ENCODE measurements at regions of chr3 and their contacts with region 1.

Region 1: DNA sequence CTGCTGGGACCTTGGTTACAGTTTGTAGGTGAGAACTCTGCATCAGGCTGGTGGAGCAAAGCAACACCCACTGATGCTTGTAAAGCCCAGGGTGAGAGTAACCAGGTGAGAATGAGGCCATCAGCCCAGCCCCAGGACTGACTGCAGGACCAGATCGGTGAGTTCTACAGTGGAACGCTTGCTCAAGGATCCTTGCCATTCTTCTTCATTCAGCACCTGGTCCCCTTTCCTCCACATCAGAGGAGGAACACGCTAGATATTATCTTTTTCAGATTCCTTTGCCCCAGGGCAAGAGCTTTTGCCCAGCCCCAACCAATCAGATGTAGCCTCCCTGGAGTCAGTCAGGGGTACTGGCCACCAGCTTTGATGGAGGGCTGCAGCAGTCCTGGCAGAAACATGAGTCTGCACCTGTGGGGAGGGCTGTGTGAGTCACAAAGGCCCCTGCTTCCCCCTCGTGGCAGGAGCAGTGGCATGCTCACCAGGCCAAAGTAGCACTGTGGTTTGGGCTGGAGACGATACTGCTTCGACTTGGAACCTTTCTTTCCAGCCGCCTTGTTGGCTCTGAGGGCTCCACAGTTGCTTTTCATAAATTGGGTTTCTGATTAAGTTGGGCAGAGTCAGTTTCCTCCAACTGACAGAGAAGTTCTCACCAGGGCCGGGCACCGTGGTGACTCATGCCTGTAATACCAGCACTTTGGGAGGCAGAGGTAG is 3.5 kb upstream of the SHISA5 start:
- DNase-seq: peak; percentile 90 to 93
- H3K4me3 ChIP-seq: no peak overlapping the region
- H3K4me3 Mint-ChIP-seq: peak overlapping the region; percentile 7
- H3K27ac Mint-ChIP-seq: peak overlapping the region; percentile 67
- H3K4me1 ChIP-seq: peaks cover 35% of the 10 kb centered on the region
- H3K4me1 Mint-ChIP-seq: peaks cover 14% of the 10 kb centered on the region
- H3K27me3 ChIP-seq: no peaks in the 10 kb centered on the region
- H3K27me3 Mint-ChIP-seq: no peaks in the 10 kb centered on the region
- CTCF ChIP-seq: peak; percentile 81 to 91

Region 2: GRCh38 chr3:48465531-48466378 is 41.8 kb before region 1 on chr3:
- CTCF ChIA-PET with region 1: interaction called, 6 read pairs
- POLR2A ChIA-PET with region 1: no interaction called
- intact Hi-C with region 1: loop called (anchors 1 kb)
- DNase-seq: peak; percentile 97
- H3K4me3 ChIP-seq: no peak overlapping the region
- H3K4me3 Mint-ChIP-seq: peak overlapping the region; percentile 56
- H3K27ac Mint-ChIP-seq: peak overlapping the region; percentile 99
- H3K4me1 ChIP-seq: peaks cover 19% of the 10 kb centered on the region
- H3K4me1 Mint-ChIP-seq: peaks cover 16% of the 10 kb centered on the region
- H3K27me3 ChIP-seq: no peaks in the 10 kb centered on the region
- H3K27me3 Mint-ChIP-seq: no peaks in the 10 kb centered on the region
- CTCF ChIP-seq: peak; percentile 61 to 83

Region 3: GRCh38 chr3:48472915-48473616 is 34.4 kb before region 1 on chr3:
- CTCF ChIA-PET with region 1: interaction called, 77 read pairs
- POLR2A ChIA-PET with region 1: interaction called, 16 read pairs
- intact Hi-C with region 1: loop called (anchors 1 kb)
- DNase-seq: peak; percentile 98 to 99
- H3K4me3 ChIP-seq: peak overlapping the region; percentile 39
- H3K4me3 Mint-ChIP-seq: peak overlapping the region; percentile 88
- H3K27ac Mint-ChIP-seq: peak overlapping the region; percentile 97
- H3K4me1 ChIP-seq: peaks cover 22% of the 10 kb centered on the region; the same call in 1 of the 2 replicates
- H3K4me1 Mint-ChIP-seq: peaks cover 20% of the 10 kb centered on the region
- H3K27me3 ChIP-seq: no peaks in the 10 kb centered on the region
- H3K27me3 Mint-ChIP-seq: no peaks in the 10 kb centered on the region
- CTCF ChIP-seq: peak; percentile 78

Region 4: DNA sequence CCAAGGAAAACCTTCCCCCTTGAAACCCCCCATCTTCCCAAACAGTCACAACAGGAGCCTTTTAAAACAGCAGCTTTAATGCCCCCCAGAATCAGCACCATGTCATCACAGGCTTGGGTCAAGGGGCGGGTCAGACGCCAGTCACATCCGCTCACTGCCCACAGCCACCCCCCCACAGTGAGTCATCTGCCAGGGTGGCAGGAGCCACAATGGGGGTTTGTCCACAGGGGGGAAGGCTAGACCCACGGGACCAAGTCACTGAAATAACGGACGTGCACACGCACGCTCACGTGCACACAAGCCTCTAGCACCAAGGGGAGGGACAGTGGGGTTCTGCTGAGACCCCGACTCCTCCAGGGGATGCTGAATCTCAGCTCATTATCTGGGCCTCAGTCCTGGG is 56.5 kb after region 1 on chr3:
- CTCF ChIA-PET with region 1: no interaction called
- POLR2A ChIA-PET with region 1: no interaction called
- intact Hi-C with region 1: no loop called
- DNase-seq: no peak
- H3K4me3 ChIP-seq: no peak overlapping the region
- H3K4me3 Mint-ChIP-seq: no peak overlapping the region
- H3K27ac Mint-ChIP-seq: no peak overlapping the region
- H3K4me1 ChIP-seq: no peaks in the 10 kb centered on the region
- H3K4me1 Mint-ChIP-seq: no peaks in the 10 kb centered on the region
- H3K27me3 ChIP-seq: no peaks in the 10 kb centered on the region
- H3K27me3 Mint-ChIP-seq: no peaks in the 10 kb centered on the region
- CTCF ChIP-seq: no peak